Left colon (tissue), 2 donors: ENCODE measurements at regions of chr16 and their contacts with region 1.

Region 1: DNA sequence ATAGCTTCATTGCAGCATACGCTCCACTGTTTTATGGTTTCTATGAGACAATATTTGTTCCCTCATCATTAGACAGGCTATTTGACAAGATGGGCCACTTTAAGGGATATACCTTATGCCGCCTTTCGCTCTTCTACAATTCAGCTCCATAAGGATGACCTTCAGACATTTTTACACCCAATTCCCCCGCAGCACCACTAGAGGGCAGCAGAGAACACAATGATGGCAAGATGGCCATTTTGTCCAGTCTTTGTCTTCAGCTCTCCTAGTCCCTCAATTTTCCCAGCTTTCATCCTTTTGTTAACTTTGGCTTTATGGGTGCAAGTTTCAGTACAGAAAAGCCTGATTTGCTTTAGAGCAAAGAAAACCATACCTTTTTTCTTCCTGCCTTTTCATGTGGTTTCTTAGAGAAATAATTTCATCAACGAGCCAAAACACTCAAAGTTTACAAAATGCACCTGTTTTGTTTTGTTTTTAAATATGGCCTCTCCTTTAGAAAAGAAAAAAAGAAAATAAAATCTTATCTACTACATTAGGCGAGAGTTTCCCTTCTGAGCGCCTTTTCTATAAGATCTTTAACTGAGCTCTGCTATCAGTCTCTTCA is 355.3 kb downstream of the TOX3 start:
- DNase-seq: peak; percentile 45 to 61
- ATAC-seq: peak; percentile 77

Region 2: GRCh38 chr16:52906281-52906680 is 714.6 kb after region 1 on chr16:
- intact Hi-C with region 1: loop called in 1 of 2 experiments (anchors 5 kb)
- DNase-seq: no peak
- ATAC-seq: no peak

Region 3: GRCh38 chr16:53022374-53022773 is 830.7 kb after region 1 on chr16:
- intact Hi-C with region 1: loop called in 1 of 2 experiments (anchors 5 kb)
- DNase-seq: peak in 1 of 2 donors; percentile 28
- ATAC-seq: peak; percentile 86